ENCODE measurements at regions of chr12 and their contacts with region 1.

Region 1: DNA sequence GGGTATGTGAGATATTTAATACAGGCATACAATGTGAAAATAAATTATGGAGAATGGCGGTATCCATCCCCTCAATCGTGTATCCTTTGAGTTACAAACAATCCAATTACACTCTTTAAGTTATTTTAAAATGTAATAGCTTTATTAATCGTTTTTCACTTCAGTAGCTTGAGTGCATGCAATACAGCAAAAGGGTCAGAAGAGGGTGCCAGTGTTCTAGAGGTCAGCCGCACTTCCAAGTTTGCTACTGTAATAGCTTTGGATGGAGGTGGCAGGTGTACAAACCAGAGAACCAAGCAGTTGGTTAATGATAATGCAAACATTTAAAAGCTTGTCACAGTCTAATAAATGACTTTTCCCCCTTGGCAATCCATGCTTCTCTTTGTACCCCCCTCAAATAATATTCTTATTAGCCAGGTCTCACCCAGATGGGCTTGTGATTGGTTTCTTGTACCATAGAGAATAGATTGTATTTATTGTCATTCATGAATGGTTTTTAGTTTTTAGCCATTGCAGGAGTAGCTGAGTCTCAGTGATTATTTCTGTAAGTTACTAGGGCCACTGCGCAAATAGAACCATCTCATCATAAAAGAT is 127.0 kb downstream of the ERC1 start:
- DNase-seq: no peak
- ATAC-seq: peak; percentile 73
- H3K4me3 ChIP-seq: no peak overlapping the region
- H3K27ac ChIP-seq: no peak overlapping the region
- H3K4me1 ChIP-seq: peaks cover 4% of the 10 kb centered on the region; the same call in 1 of the 2 replicates
- H3K27me3 ChIP-seq: no peaks in the 10 kb centered on the region
- CTCF ChIP-seq: peak; percentile 80 to 87 (median 83)
- EP300 ChIP-seq: no peak
- POLR2A ChIP-seq: no peak
- RAD21 ChIP-seq: peak; percentile 97

Region 2: DNA sequence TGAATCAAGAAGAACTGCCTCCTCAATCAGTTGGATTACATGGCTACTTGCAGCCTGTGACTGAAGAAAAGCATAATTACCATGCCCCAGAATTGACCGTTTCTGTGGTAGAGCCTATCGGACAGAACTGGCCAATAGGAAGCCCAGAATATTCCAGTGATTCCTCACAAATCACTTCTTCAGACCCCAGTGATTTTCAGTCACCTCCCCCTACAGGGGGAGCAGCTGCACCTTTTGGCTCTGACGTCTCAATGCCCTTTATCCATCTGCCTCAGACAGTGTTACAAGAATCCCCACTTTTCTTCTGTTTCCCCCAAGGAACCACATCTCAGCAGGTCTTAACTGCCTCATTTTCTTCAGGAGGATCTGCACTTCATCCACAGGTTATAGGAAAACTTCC is 249.3 kb before region 1 on chr12:
- CTCF ChIA-PET with region 1: no interaction called
- POLR2A ChIA-PET with region 1: no interaction called
- RAD21 ChIA-PET with region 1: no interaction called
- SMC1A ChIA-PET with region 1: no interaction called
- in situ Hi-C with region 1: no loop called
- intact Hi-C with region 1: no loop called
- DNase-seq: no peak
- ATAC-seq: no peak; the same call in 2 of the 3 replicates
- H3K4me3 ChIP-seq: no peak overlapping the region
- H3K27ac ChIP-seq: no peak overlapping the region
- H3K4me1 ChIP-seq: no peaks in the 10 kb centered on the region
- H3K27me3 ChIP-seq: no peaks in the 10 kb centered on the region
- CTCF ChIP-seq: 0 out of 6 replicates have a peak, but pooled peaks of 1 of the 3 experiments have one; percentile 7
- EP300 ChIP-seq: no peak
- POLR2A ChIP-seq: no peak
- RAD21 ChIP-seq: no peak

Region 3: GRCh38 chr12:1130164-1130563 is 12.1 kb after region 1 on chr12:
- CTCF ChIA-PET with region 1: interaction called, 49 read pairs
- POLR2A ChIA-PET with region 1: no interaction called
- RAD21 ChIA-PET with region 1: interaction called, 23 read pairs
- SMC1A ChIA-PET with region 1: interaction called, 36 read pairs
- in situ Hi-C with region 1: no loop called
- intact Hi-C with region 1: no loop called
- DNase-seq: no peak
- ATAC-seq: peak; percentile 66
- H3K4me3 ChIP-seq: no peak overlapping the region
- H3K27ac ChIP-seq: no peak overlapping the region
- H3K4me1 ChIP-seq: no peaks in the 10 kb centered on the region
- H3K27me3 ChIP-seq: no peaks in the 10 kb centered on the region
- CTCF ChIP-seq: no peak
- EP300 ChIP-seq: no peak
- POLR2A ChIP-seq: no peak
- RAD21 ChIP-seq: no peak

Region 4: GRCh38 chr12:1234073-1234472 is 116.0 kb after region 1 on chr12:
- CTCF ChIA-PET with region 1: interaction called, 10 read pairs
- POLR2A ChIA-PET with region 1: no interaction called
- RAD21 ChIA-PET with region 1: no interaction called
- SMC1A ChIA-PET with region 1: interaction called, 3 read pairs
- in situ Hi-C with region 1: no loop called
- intact Hi-C with region 1: no loop called
- DNase-seq: no peak
- ATAC-seq: no peak
- H3K4me3 ChIP-seq: no peak overlapping the region
- H3K27ac ChIP-seq: no peak overlapping the region
- H3K4me1 ChIP-seq: no peaks in the 10 kb centered on the region
- H3K27me3 ChIP-seq: no peaks in the 10 kb centered on the region
- CTCF ChIP-seq: no peak
- EP300 ChIP-seq: no peak
- POLR2A ChIP-seq: no peak
- RAD21 ChIP-seq: no peak

Region 5: GRCh38 chr12:1318327-1319031 is 200.4 kb after region 1 on chr12:
- CTCF ChIA-PET with region 1: interaction called, 11 read pairs
- POLR2A ChIA-PET with region 1: no interaction called
- RAD21 ChIA-PET with region 1: interaction called, 6 read pairs
- SMC1A ChIA-PET with region 1: interaction called, 3 read pairs
- in situ Hi-C with region 1: no loop called
- intact Hi-C with region 1: no loop called
- DNase-seq: no peak
- ATAC-seq: no peak
- H3K4me3 ChIP-seq: no peak overlapping the region
- H3K27ac ChIP-seq: no peak overlapping the region
- H3K4me1 ChIP-seq: no peaks in the 10 kb centered on the region
- H3K27me3 ChIP-seq: no peaks in the 10 kb centered on the region
- CTCF ChIP-seq: no peak
- EP300 ChIP-seq: no peak
- POLR2A ChIP-seq: no peak
- RAD21 ChIP-seq: no peak

Region 6: GRCh38 chr12:1533602-1534304 is 415.7 kb after region 1 on chr12:
- CTCF ChIA-PET with region 1: interaction called, 38 read pairs
- POLR2A ChIA-PET with region 1: interaction called, 3 read pairs
- RAD21 ChIA-PET with region 1: interaction called, 33 read pairs
- SMC1A ChIA-PET with region 1: interaction called, 31 read pairs
- in situ Hi-C with region 1: no loop called
- intact Hi-C with region 1: loop called (anchors 5 kb)
- DNase-seq: peak; percentile 77
- ATAC-seq: peak; percentile 80
- H3K4me3 ChIP-seq: peak overlapping the region; percentile 66
- H3K27ac ChIP-seq: peak overlapping the region; percentile 81
- H3K4me1 ChIP-seq: peaks cover 37% of the 10 kb centered on the region
- H3K27me3 ChIP-seq: peaks cover 0 to 5% of the 10 kb centered on the region in 2 experiments; a peak in 1 of 4 replicates
- CTCF ChIP-seq: no peak
- EP300 ChIP-seq: peak; percentile 54 to 58; a peak in 3 of 4 replicates
- POLR2A ChIP-seq: no peak
- RAD21 ChIP-seq: no peak

Region 7: DNA sequence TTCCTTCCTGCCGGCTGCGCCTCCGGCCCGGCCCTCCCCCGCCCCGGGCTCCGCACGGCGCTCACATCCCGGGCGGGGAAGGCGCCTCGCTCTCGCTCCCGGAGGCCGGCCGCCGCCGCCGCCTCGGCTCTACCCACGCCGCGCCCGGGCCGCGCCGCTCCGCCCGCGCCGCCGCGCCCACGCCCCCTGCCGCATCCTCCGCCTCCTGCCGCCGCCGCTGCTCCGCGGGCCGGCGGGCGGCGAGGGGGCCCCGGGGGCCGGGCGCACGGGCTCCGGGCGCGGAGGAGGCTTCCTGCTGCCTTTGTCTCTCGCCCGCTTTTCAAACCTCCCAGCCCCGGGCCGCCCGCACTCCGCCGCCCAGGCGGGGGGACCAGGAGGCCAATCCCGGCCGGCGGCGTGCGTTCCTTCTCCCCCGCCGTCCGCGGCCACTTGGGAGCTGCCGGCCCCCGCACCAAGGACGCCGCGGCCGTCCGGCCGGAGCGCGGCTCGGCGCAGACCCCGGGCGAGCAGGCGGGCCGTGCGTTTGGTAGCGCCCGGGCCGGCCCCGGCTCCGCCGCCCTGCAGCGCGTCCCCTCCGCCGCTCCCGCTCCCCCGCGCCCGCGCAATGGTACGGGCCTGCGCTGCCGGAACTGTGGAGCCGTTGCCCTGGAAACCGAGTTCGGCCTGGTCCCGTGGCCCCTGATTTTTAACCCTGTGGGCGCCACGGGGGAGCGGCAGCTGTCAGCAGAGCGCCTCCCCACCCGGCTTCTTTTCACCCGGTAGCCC is 476.4 kb after region 1 on chr12 and contains the start of gene FBXL14:
- CTCF ChIA-PET with region 1: interaction called, 62 read pairs
- POLR2A ChIA-PET with region 1: interaction called, 5 read pairs
- RAD21 ChIA-PET with region 1: interaction called, 71 read pairs
- SMC1A ChIA-PET with region 1: interaction called, 84 read pairs
- in situ Hi-C with region 1: loop called (anchors 5 kb)
- intact Hi-C with region 1: no loop called
- DNase-seq: no peak
- ATAC-seq: peak; percentile 66
- H3K4me3 ChIP-seq: peak within 1 kb of the TSS; percentile 97
- H3K27ac ChIP-seq: peak within 1 kb of the TSS; percentile 34
- H3K4me1 ChIP-seq: peaks cover 11% of the 10 kb centered on the region
- H3K27me3 ChIP-seq: no peaks in the 10 kb centered on the region
- CTCF ChIP-seq: no peak
- EP300 ChIP-seq: no peak
- POLR2A ChIP-seq: peak; percentile 55
- RAD21 ChIP-seq: no peak
- polyA plus RNA-seq, gene FBXL14: 0.44 to 0.64 TPM

Measured in GM12878 (cell line).